GM10248 (cell line): ENCODE measurements at regions of chr14 and their contacts with region 1.

Region 1: GRCh38 chr14:23259426-23259825 is 21.7 kb downstream of the RNF212B start:
- DNase-seq: no peak
- CTCF ChIP-seq: no peak

Region 2: GRCh38 chr14:23006544-23007419 is 252.6 kb before region 1 on chr14:
- CTCF ChIA-PET with region 1: no interaction called
- POLR2A ChIA-PET with region 1: no interaction called
- DNase-seq: peak; percentile 97
- CTCF ChIP-seq: no peak

Region 3: DNA sequence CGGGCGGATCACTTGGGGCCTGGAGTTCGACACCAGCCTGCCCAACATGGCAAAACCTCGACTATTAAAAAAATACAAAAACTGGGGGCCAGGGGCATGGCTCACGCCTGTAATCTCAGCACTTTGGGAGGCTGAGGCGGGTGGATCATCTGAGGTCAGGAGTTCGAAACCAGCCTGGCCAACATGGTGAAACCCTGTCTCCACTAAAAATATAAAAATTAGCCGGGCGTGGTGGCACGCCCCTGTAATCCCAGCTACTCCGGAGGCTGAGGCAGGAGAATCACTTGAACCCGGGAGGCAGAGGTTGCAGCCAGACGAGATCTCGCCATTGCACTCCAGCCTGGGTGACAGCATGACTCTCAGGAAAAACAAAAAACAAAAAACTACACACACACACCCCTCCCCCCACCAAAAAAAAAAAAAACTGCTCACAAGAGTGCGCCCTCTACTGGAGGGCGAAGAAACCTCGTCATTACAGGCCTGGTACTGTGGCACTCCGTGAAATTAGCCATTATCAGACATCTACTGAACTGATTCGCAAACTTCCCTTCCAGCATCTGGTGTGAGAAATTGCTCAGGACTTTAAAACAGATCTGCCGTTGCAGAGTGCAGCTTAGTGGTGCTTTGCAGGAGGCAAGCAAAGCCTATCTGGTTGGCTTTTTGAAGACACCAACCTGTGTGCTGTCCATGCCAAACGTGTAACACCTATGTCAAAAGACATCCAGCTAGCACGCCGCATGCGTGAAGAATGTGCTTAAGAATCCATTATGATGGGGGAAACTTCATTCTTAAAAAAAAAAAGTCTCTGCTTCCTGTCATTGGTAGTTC is 35.5 kb after region 1 on chr14:
- CTCF ChIA-PET with region 1: interaction called, 17 read pairs
- POLR2A ChIA-PET with region 1: no interaction called
- DNase-seq: no peak
- CTCF ChIP-seq: peak; percentile 76

Region 4: GRCh38 chr14:23320774-23321571 is 61.5 kb after region 1 on chr14 and contains the start of gene PABPN1:
- CTCF ChIA-PET with region 1: interaction called, 10 read pairs
- POLR2A ChIA-PET with region 1: no interaction called
- DNase-seq: peak; percentile 96
- CTCF ChIP-seq: no peak